ENCODE measurements at regions of chr5 and their contacts with region 1.

Region 1: DNA sequence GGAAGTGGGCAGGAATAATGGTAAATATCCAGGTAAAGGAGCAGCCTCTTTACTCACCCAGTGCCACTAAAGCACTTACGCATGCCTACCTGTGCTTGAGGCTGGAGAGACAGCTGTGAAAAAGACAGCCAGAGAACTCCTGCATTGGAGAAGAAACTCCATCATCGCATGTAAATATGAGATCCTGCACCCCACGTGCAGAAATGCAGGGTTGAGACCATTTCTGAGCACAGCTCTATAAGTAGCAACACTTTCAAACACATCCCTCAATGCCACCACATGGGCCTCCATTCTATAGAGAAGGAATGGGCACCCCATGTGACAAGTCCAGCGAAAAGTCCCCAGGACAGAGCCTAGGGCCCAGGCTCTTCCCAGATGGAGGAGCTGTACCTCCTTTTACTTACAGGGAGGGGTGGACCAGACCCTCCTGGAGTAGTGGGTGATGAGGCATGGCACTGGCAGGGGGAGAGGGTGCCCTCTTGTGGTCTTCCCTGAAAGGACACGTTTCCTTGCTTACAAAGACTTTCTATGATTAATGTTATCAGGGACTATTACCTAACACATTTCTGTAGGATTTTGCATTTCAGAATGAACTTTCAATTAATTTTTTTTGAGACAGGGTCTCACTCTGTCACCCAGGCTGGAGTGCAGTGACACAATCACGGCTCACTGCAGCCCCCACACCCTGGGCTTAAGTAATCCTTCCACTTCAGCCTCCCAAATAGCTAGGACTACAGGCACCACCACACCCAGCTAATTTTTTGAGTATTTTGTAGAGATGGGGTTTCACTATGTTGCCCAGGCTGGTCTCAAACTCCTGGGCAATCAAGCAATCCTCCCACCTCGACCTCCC is 55.3 kb upstream of the IL17B start:
- DNase-seq: peak in 1 of 3 donors; percentile 82
- ATAC-seq: peak; percentile 56
- H3K4me3 ChIP-seq: no peak overlapping the region
- H3K4me1 ChIP-seq: no peaks in the 10 kb centered on the region
- CTCF ChIP-seq: peak; percentile 71

Region 2: GRCh38 chr5:149317281-149318048 is 116.9 kb before region 1 on chr5:
- intact Hi-C with region 1: loop called in 1 of 2 experiments (anchors 10 kb)
- DNase-seq: peak in 1 of 3 donors; percentile 63
- ATAC-seq: peak; percentile 21
- H3K4me3 ChIP-seq: no peak overlapping the region
- H3K4me1 ChIP-seq: peaks cover 19% of the 10 kb centered on the region
- CTCF ChIP-seq: peak; percentile 49

Region 3: GRCh38 chr5:149367249-149367971 is 67.0 kb before region 1 on chr5:
- intact Hi-C with region 1: loop called in 1 of 2 experiments (anchors 10 kb)
- DNase-seq: peak in 2 of 3 donors; percentile 56 to 73
- ATAC-seq: peak; percentile 79
- H3K4me3 ChIP-seq: no peak overlapping the region
- H3K4me1 ChIP-seq: peaks cover 5% of the 10 kb centered on the region
- CTCF ChIP-seq: peak; percentile 41

Region 4: GRCh38 chr5:149381987-149382340 is 52.4 kb before region 1 on chr5:
- intact Hi-C with region 1: loop called (anchors 5 to 10 kb)
- DNase-seq: peak in 2 of 3 donors; percentile 84 to 86
- ATAC-seq: peak; percentile 84
- H3K4me3 ChIP-seq: no peak overlapping the region
- H3K4me1 ChIP-seq: peaks cover 7% of the 10 kb centered on the region
- CTCF ChIP-seq: peak; percentile 87

Region 5: GRCh38 chr5:149474212-149474618 is 39.8 kb after region 1 on chr5:
- intact Hi-C with region 1: no loop called
- DNase-seq: peak in 2 of 3 donors; percentile 64 to 78
- ATAC-seq: peak; percentile 87
- H3K4me3 ChIP-seq: no peak overlapping the region
- H3K4me1 ChIP-seq: peaks cover 12% of the 10 kb centered on the region
- CTCF ChIP-seq: no peak

Region 6: GRCh38 chr5:149540089-149540488 is 105.7 kb after region 1 on chr5:
- intact Hi-C with region 1: no loop called
- DNase-seq: no peak
- ATAC-seq: no peak
- H3K4me3 ChIP-seq: no peak overlapping the region
- H3K4me1 ChIP-seq: peaks cover 36% of the 10 kb centered on the region
- CTCF ChIP-seq: no peak

Measured in mucosa of descending colon (tissue), 3 donors.